ENCODE measurements at regions of chr9 and their contacts with region 1.

Region 1: GRCh38 chr9:38127271-38127882 is 58.4 kb upstream of the SHB start:
- DNase-seq: peak; percentile 28

Region 2: DNA sequence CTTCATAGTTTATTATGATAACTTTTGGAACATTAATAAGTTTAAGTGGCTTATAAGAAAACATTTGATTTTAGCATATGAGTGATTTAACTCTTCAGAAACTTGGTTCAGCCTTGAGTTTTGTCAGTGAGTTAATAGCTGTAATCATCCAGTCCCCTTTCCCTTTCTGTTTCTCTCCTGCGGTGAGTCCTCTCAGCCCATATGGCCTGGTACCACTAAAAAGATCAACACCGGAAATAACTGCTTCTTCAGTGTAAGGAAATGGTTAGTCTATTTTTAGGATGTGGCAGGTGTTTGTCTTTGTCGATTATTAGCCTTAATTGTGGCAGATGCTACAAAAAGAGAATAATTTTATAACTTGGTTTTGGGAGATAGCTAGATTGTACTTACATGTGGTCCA is 825.1 kb before region 1 on chr9:
- intact Hi-C with region 1: no loop called
- DNase-seq: no peak

Region 3: DNA sequence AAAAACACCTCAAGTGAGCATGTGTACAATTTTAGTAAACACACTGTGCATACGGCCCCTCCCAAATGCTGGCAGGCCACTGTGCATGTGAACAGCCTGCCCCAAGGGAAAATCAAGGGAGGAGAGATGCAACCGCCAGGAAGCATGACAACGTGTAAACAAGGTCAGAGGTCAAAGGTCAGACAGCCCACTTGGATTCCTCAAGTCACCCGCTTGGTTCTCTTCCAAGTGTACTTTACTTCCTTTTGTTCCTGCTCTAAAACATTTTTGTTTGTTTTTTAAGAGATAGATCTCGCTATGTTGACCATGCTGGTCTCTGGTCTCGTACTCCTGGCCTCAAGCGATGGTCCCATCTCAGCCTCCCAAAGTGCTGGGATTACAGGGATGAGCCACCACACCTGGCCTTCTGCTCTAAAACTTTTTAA is 68.4 kb after region 1 on chr9:
- intact Hi-C with region 1: loop called in 1 of 2 experiments (anchors 10 kb)
- DNase-seq: no peak

Measured in posterior vena cava (tissue), 2 donors.